ENCODE measurements at regions of chr13 and their contacts with region 1.

Region 1: DNA sequence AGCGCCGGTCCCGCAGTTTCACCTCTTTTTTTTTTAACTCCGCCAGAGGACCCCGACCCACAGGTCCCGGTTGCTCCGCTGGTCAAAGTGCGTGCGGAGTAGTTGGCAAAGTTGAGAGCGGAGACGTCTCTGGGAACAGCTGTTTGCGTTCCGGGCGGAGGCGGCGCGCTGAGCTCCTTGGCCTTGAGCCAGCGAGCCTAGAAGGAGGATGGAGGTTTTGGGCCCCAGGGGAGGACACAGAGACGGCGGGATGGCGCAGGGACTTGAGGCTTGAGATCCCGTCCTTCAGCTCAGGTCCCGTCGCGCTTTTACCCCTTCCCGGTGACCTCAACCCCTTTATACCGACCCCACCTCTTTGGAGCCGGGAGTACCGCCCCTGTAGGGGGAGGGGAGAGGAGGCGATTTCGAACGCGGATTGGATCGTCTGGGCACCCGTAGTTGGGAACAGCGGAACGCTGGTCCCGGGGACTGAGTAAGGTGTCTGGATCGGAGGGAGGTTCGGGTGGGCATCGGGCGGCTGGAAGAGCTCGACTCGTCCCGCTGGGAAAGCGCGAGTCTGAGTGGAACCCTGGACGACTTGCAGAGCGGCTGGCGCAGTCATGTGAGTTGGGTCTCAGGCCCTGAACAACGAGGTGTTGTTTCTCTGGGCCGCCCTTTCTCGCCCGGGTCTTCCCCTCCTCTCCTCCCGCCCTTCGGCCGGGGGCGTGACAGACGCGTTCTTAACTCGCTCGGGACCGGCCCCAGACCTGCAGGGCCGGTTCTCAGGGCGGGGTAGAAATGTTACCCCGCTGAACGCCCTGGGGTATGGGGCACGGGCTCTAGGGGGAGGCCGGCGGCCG is at the start of gene WBP4:
- DNase-seq: peak; percentile 88 to 94
- ATAC-seq: peak; percentile 79 to 91 (median 80)
- H3K4me3 ChIP-seq: peak within 1 kb of the TSS; percentile 96
- H3K4me3 Mint-ChIP-seq: peak within 1 kb of the TSS; percentile 97
- H3K27ac ChIP-seq: peak within 1 kb of the TSS; percentile 86
- H3K27ac Mint-ChIP-seq: peak within 1 kb of the TSS; percentile 95 to 100
- H3K4me1 ChIP-seq: peaks cover 3% of the 10 kb centered on the region
- H3K4me1 Mint-ChIP-seq: peaks cover 24 to 53% of the 10 kb centered on the region in 2 donors
- H3K27me3 ChIP-seq: no peaks in the 10 kb centered on the region
- H3K27me3 Mint-ChIP-seq: no peaks in the 10 kb centered on the region
- CTCF ChIP-seq: peak; percentile 9
- total RNA-seq, gene WBP4: 4.2 to 6.8 (median 5.1) TPM

Region 2: GRCh38 chr13:39297023-39297422 is 1764.3 kb before region 1 on chr13:
- intact Hi-C with region 1: no loop called
- DNase-seq: no peak
- ATAC-seq: no peak
- H3K4me3 ChIP-seq: no peak overlapping the region
- H3K4me3 Mint-ChIP-seq: no peak overlapping the region
- H3K27ac ChIP-seq: no peak overlapping the region
- H3K27ac Mint-ChIP-seq: no peak overlapping the region
- H3K4me1 ChIP-seq: no peaks in the 10 kb centered on the region
- H3K4me1 Mint-ChIP-seq: no peaks in the 10 kb centered on the region
- H3K27me3 ChIP-seq: no peaks in the 10 kb centered on the region
- H3K27me3 Mint-ChIP-seq: no peaks in the 10 kb centered on the region
- CTCF ChIP-seq: no peak

Region 3: DNA sequence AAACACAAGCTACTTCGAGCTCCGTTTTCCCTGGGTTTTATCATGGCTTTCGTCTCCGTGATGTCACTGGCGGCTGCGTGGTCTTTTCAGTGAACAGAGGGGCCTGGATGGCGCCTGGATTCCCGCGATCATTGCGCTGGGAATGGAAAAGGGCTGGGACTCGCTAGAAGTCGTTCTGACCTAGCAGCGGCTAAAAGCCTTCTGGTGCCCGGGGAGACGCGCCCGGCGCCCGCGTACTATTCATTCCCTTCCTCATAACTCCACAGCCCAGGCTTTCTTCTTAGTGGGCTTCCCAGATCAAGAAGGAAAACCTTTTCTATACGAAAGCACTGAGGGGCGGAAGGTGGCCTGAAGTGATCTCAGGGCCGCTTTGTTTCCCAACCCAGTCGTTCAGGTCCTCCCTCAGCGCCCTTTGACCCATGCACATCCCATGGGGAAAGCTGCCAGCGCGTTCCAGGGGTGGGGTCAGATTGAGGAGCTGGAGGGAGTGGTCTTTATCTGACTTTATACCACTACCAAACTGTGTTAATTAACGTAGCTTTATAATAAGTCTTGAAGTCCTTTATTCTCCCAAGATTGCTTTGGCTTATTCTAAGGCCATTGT is 138.8 kb before region 1 on chr13:
- intact Hi-C with region 1: loop called (anchors 2 kb)
- DNase-seq: peak in 1 of 2 donors; percentile 17
- ATAC-seq: no peak
- H3K4me3 ChIP-seq: no peak overlapping the region
- H3K4me3 Mint-ChIP-seq: peak overlapping the region; percentile 97
- H3K27ac ChIP-seq: no peak overlapping the region
- H3K27ac Mint-ChIP-seq: peak overlapping the region; percentile 90
- H3K4me1 ChIP-seq: peaks cover 12% of the 10 kb centered on the region
- H3K4me1 Mint-ChIP-seq: peaks cover 19 to 20% of the 10 kb centered on the region in 2 donors
- H3K27me3 ChIP-seq: no peaks in the 10 kb centered on the region
- H3K27me3 Mint-ChIP-seq: no peaks in the 10 kb centered on the region
- CTCF ChIP-seq: no peak

Region 4: GRCh38 chr13:41019011-41019487 is 42.2 kb before region 1 on chr13 and contains the start of gene ELF1:
- intact Hi-C with region 1: loop called (anchors 1 kb)
- DNase-seq: peak; percentile 32 to 87
- ATAC-seq: peak; percentile 87 to 93 (median 91)
- H3K4me3 ChIP-seq: peak within 1 kb of the TSS; percentile 94
- H3K4me3 Mint-ChIP-seq: peak within 1 kb of the TSS; percentile 99
- H3K27ac ChIP-seq: peak within 1 kb of the TSS; percentile 100
- H3K27ac Mint-ChIP-seq: peak within 1 kb of the TSS; percentile 91 to 98
- H3K4me1 ChIP-seq: peaks cover 6% of the 10 kb centered on the region
- H3K4me1 Mint-ChIP-seq: peaks cover 45 to 52% of the 10 kb centered on the region in 2 donors
- H3K27me3 ChIP-seq: no peaks in the 10 kb centered on the region
- H3K27me3 Mint-ChIP-seq: no peaks in the 10 kb centered on the region
- CTCF ChIP-seq: no peak
- total RNA-seq, gene ELF1: 174 to 216 (median 193) TPM

Region 5: GRCh38 chr13:41263261-41264027 is 202.2 kb after region 1 on chr13 and contains the start of gene MTRF1:
- intact Hi-C with region 1: loop called (anchors 2 kb)
- DNase-seq: peak; percentile 76 to 89
- ATAC-seq: peak; percentile 92 to 94 (median 93)
- H3K4me3 ChIP-seq: peak within 1 kb of the TSS; percentile 85
- H3K4me3 Mint-ChIP-seq: peak within 1 kb of the TSS; percentile 95
- H3K27ac ChIP-seq: peak within 1 kb of the TSS; percentile 81
- H3K27ac Mint-ChIP-seq: peak within 1 kb of the TSS; percentile 93 to 99
- H3K4me1 ChIP-seq: peaks cover 5% of the 10 kb centered on the region
- H3K4me1 Mint-ChIP-seq: peaks cover 14 to 15% of the 10 kb centered on the region in 2 donors
- H3K27me3 ChIP-seq: no peaks in the 10 kb centered on the region
- H3K27me3 Mint-ChIP-seq: no peaks in the 10 kb centered on the region
- CTCF ChIP-seq: no peak
- total RNA-seq, gene MTRF1: 20.3 to 24.1 (median 24.0) TPM

Region 6: GRCh38 chr13:41274881-41275280 is 213.6 kb after region 1 on chr13:
- intact Hi-C with region 1: no loop called
- DNase-seq: no peak
- ATAC-seq: no peak
- H3K4me3 ChIP-seq: no peak overlapping the region
- H3K4me3 Mint-ChIP-seq: no peak overlapping the region
- H3K27ac ChIP-seq: no peak overlapping the region
- H3K27ac Mint-ChIP-seq: no peak overlapping the region
- H3K4me1 ChIP-seq: peaks cover 3% of the 10 kb centered on the region
- H3K4me1 Mint-ChIP-seq: peaks cover 8 to 10% of the 10 kb centered on the region in 2 donors
- H3K27me3 ChIP-seq: no peaks in the 10 kb centered on the region
- H3K27me3 Mint-ChIP-seq: no peaks in the 10 kb centered on the region
- CTCF ChIP-seq: no peak